Activated CD8-positive, alpha-beta T cell treated with anti-CD3 and anti-CD28 coated beads for 36 hours (primary cell): ENCODE measurements at regions of chr3 and their contacts with region 1.

Region 1: GRCh38 chr3:71102111-71102983 is 481.2 kb downstream of the FOXP1 start:
- DNase-seq: no peak
- ATAC-seq: no peak
- H3K4me3 Mint-ChIP-seq: peak overlapping the region; percentile 56
- H3K27ac Mint-ChIP-seq: peak overlapping the region; percentile 90
- H3K4me1 Mint-ChIP-seq: peaks cover 87% of the 10 kb centered on the region
- H3K27me3 Mint-ChIP-seq: no peaks in the 10 kb centered on the region
- CTCF ChIP-seq: no peak

Region 2: GRCh38 chr3:71121429-71122167 is 19.3 kb after region 1 on chr3:
- CTCF ChIA-PET with region 1: interaction called, 4 read pairs
- POLR2A ChIA-PET with region 1: interaction called, 10 read pairs
- intact Hi-C with region 1: no loop called
- DNase-seq: no peak
- ATAC-seq: peak; percentile 32
- H3K4me3 Mint-ChIP-seq: no peak overlapping the region
- H3K27ac Mint-ChIP-seq: peak overlapping the region; percentile 72
- H3K4me1 Mint-ChIP-seq: peaks cover 90% of the 10 kb centered on the region
- H3K27me3 Mint-ChIP-seq: no peaks in the 10 kb centered on the region
- CTCF ChIP-seq: no peak